ENCODE measurements at regions of chr6 and their contacts with region 1.

Region 1: GRCh38 chr6:36793913-36794712 is 45.1 kb downstream of the CPNE5 start:
- DNase-seq: peak; percentile 12
- ATAC-seq: no peak
- H3K4me3 ChIP-seq: no peak overlapping the region
- H3K27ac ChIP-seq: no peak overlapping the region
- H3K4me1 ChIP-seq: no peaks in the 10 kb centered on the region
- H3K27me3 ChIP-seq: peaks cover 56% of the 10 kb centered on the region
- CTCF ChIP-seq: no peak
- POLR2A ChIP-seq: no peak
- RAD21 ChIP-seq: no peak

Region 2: GRCh38 chr6:36839749-36840431 is 45.8 kb after region 1 on chr6:
- CTCF ChIA-PET with region 1: interaction called, 3 read pairs
- POLR2A ChIA-PET with region 1: no interaction called
- dilution Hi-C with region 1: no loop called
- in situ Hi-C with region 1: no loop called
- intact Hi-C with region 1: loop called (anchors 5 kb)
- DNase-seq: no peak
- ATAC-seq: peak; percentile 78
- H3K4me3 ChIP-seq: peak overlapping the region; percentile 42
- H3K27ac ChIP-seq: no peak overlapping the region
- H3K4me1 ChIP-seq: peaks cover 8% of the 10 kb centered on the region; the same call in 1 of the 2 replicates
- H3K27me3 ChIP-seq: peaks cover 55% of the 10 kb centered on the region
- CTCF ChIP-seq: peak; percentile 34; the same call in 1 of the 2 replicates
- POLR2A ChIP-seq: no peak
- RAD21 ChIP-seq: no peak